Activated CD8-positive, alpha-beta T cell treated with anti-CD3 and anti-CD28 coated beads for 36 hours (primary cell): ENCODE measurements at regions of chr2 and their contacts with region 1.

Region 1: DNA sequence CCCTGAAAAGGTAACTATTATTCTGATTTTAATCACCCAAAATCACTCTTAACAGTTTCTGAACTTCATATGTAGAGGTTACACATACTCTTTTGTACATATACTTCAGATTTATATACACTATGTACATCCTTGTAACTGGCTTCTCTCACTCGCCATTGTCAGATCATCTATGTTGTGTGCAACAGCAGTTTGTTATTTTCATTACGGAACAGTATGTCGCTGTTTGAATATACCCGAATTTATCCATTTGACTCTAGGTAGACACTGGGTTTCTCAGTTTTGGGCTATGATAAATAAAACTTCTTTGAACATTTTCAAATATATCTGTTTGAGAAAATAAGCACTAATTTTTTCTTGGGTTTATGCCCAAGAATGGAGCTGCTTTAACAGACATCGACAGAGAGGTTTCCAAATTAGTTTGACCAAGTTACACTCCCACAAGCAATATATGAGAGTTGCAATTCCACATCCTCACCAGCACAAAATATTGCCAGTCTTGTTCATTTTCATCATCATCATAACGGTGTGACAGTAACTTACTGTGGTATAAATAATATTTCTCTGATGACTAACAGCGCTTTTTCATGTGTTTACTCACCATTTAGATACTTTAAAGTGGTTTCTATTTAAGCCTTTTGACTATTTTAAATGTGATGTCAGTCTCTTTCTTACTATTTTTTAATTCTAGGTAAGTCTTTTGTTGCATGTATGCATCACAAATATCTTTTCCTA is 80.9 kb downstream of the SMC6 start:
- DNase-seq: no peak
- ATAC-seq: peak; percentile 79
- H3K4me3 Mint-ChIP-seq: no peak overlapping the region
- H3K27ac Mint-ChIP-seq: no peak overlapping the region
- H3K4me1 Mint-ChIP-seq: no peaks in the 10 kb centered on the region
- H3K27me3 Mint-ChIP-seq: no peaks in the 10 kb centered on the region
- CTCF ChIP-seq: no peak

Region 2: DNA sequence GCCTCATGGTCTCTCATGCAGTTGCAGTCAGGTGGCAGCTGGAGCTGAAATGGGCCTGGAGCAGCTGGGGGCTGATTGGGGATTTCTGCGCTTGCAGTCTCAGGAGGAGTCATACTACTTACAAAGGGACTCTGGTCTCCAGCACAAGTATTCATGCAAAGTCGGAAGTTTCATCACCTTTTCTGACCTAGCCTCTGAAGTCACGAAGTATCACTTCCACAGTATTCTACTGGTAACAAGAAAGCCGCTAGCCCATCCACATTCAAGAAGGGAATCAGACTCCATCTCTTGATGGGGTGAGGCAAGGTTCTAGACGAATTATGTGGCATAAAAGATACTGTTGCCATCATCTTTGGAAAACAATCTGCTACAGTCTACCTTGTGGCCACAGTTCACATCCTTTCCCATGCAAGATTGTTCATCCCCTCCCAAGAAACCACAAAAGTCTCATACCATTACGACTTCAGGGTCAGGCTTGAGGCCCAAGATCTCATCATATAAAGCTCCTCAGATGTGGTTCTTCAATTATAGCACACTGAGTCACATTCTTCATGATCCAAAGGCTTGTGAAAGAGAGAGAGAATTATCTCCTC is 14.4 kb before region 1 on chr2:
- CTCF ChIA-PET with region 1: interaction called, 41 read pairs
- POLR2A ChIA-PET with region 1: no interaction called
- intact Hi-C with region 1: no loop called
- DNase-seq: peak; percentile 11
- ATAC-seq: peak; percentile 72
- H3K4me3 Mint-ChIP-seq: no peak overlapping the region
- H3K27ac Mint-ChIP-seq: no peak overlapping the region
- H3K4me1 Mint-ChIP-seq: peaks cover 11% of the 10 kb centered on the region
- H3K27me3 Mint-ChIP-seq: no peaks in the 10 kb centered on the region
- CTCF ChIP-seq: no peak